Activated CD4-positive, alpha-beta T cell treated with anti-CD3 and anti-CD28 coated beads, Interleukin-2, amount 10 ng/mL, durations not matched to agents 24 days and 14 days (primary cell): ENCODE measurements at regions of chrX and their contacts with region 1.

Region 1: GRCh38 chrX:134969726-134970125 is 21.1 kb upstream of the SMIM10 start:
- DNase-seq: no peak
- H3K4me3 Mint-ChIP-seq: no peak overlapping the region
- H3K27ac Mint-ChIP-seq: no peak overlapping the region
- H3K4me1 Mint-ChIP-seq: peaks cover 1% of the 10 kb centered on the region
- H3K27me3 Mint-ChIP-seq: peaks cover 9% of the 10 kb centered on the region

Region 2: DNA sequence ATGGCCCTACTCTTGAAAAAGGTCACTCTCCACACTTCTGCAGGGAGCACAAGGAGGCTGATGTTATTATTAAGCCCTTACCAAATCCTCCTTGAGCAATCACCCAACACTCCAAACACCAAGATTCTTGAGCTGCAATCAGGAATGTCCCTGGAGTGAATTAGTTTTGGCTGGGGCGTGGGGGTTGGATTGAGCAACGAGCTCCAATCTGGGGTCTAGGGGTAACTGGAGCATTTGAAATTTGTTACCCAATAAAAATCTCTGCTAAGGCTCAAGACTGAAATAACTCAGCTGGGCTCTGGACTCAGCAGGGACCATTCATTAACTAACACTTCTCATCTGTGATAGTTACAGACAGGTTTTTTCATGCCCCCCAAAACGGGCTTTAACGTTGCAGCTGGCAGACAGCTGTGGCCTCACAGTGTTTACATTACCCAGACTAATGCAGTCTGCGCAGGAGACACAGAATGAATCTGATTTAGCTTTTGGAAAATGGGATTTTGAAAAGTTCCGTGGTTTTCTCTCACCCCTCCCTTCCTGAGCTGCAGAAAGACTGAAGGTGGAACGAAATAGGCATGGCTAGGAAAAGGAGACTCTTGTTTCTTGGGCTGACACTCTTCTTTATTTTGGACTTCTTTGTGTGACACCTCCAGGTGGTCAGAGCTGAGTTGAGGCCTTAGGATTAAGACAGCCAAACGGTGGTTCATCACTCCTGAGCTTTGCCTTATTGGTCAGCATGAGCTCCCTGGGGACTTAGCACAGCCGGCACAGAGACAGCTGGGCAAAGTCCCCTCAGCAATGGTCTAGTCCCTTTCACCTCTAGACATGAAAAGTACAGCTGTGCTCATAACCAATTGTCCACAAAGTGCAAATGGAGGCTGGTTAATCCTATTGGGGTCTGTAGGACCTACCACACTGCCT is 338.0 kb before region 1 on chrX:
- intact Hi-C with region 1: no loop called
- DNase-seq: no peak
- H3K4me3 Mint-ChIP-seq: no peak overlapping the region
- H3K27ac Mint-ChIP-seq: no peak overlapping the region
- H3K4me1 Mint-ChIP-seq: peaks cover 4% of the 10 kb centered on the region
- H3K27me3 Mint-ChIP-seq: peaks cover 1% of the 10 kb centered on the region

Region 3: DNA sequence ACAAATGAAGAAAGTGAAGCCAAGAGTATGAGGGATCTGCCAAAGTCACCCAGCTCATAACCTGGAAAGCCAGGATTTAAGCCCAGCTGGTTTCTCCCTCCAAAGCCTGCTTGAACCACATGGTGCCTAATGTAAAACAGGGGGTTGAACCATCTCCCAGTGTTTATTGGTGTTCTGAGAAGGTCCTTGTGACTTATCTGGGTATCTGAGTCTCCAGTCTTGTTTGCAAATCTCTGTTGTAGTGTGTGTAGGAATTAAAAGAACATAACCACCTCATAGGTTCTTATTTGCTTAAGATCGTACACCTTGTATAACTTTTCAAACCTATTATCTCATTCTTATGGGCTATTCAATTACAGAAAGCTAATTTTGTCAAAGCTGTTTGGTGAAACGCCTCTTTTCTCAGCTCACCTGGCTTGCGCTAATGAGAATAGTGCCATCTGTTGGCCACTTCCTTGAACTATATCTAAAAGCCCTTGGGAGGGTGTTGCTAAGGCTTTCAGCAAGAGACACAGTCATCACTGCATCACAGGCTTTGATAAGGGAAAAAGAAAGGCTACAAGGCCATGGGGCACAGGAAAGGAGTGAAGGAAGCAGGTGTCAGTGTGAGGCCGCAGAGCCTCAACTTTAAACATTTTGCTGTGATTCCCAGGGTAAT is 116.6 kb after region 1 on chrX:
- intact Hi-C with region 1: loop called (anchors 1 kb)
- DNase-seq: peak; percentile 86
- H3K4me3 Mint-ChIP-seq: no peak overlapping the region
- H3K27ac Mint-ChIP-seq: no peak overlapping the region
- H3K4me1 Mint-ChIP-seq: peaks cover 6% of the 10 kb centered on the region
- H3K27me3 Mint-ChIP-seq: peaks cover 4% of the 10 kb centered on the region

Region 4: GRCh38 chrX:135256923-135257322 is 287.2 kb after region 1 on chrX:
- intact Hi-C with region 1: no loop called
- DNase-seq: no peak
- H3K4me3 Mint-ChIP-seq: no peak overlapping the region
- H3K27ac Mint-ChIP-seq: no peak overlapping the region
- H3K4me1 Mint-ChIP-seq: no peaks in the 10 kb centered on the region
- H3K27me3 Mint-ChIP-seq: peaks cover 3% of the 10 kb centered on the region